Activated B cell treated with CpG ODN at 0.5 μM for 24 hours (primary cell): ENCODE measurements at regions of chr5 and their contacts with region 1.

Region 1: GRCh38 chr5:111512375-111513130 is at the start of gene STARD4:
- DNase-seq: peak; percentile 94
- ATAC-seq: peak; percentile 96
- H3K4me3 Mint-ChIP-seq: peak within 1 kb of the TSS; percentile 99
- H3K27ac Mint-ChIP-seq: peak within 1 kb of the TSS; percentile 99
- H3K4me1 Mint-ChIP-seq: peaks cover 35% of the 10 kb centered on the region
- H3K27me3 Mint-ChIP-seq: no peaks in the 10 kb centered on the region
- CTCF ChIP-seq: no peak
- total RNA-seq, gene STARD4: 32.2 and 40.3 TPM in 2 replicates

Region 2: GRCh38 chr5:110738812-110739651 is 773.5 kb before region 1 on chr5 and contains the start of gene SLC25A46:
- CTCF ChIA-PET with region 1: no interaction called
- POLR2A ChIA-PET with region 1: interaction called, 4 read pairs
- intact Hi-C with region 1: loop called (anchors 2 kb)
- DNase-seq: peak; percentile 79
- ATAC-seq: peak; percentile 82
- H3K4me3 Mint-ChIP-seq: peak within 1 kb of the TSS; percentile 97
- H3K27ac Mint-ChIP-seq: peak within 1 kb of the TSS; percentile 96
- H3K4me1 Mint-ChIP-seq: peaks cover 21% of the 10 kb centered on the region
- H3K27me3 Mint-ChIP-seq: peaks cover 3% of the 10 kb centered on the region
- CTCF ChIP-seq: no peak
- total RNA-seq, gene SLC25A46: 39.9 and 42.2 TPM in 2 replicates

Region 3: GRCh38 chr5:111530298-111530740 is 17.8 kb after region 1 on chr5:
- CTCF ChIA-PET with region 1: interaction called, 52 read pairs
- POLR2A ChIA-PET with region 1: interaction called, 33 read pairs
- intact Hi-C with region 1: loop called (anchors 1 kb)
- DNase-seq: peak; percentile 61
- ATAC-seq: peak; percentile 100
- H3K4me3 Mint-ChIP-seq: peak overlapping the region; percentile 49
- H3K27ac Mint-ChIP-seq: peak overlapping the region; percentile 75
- H3K4me1 Mint-ChIP-seq: peaks cover 23% of the 10 kb centered on the region
- H3K27me3 Mint-ChIP-seq: no peaks in the 10 kb centered on the region
- CTCF ChIP-seq: no peak

Region 4: GRCh38 chr5:111757355-111758283 is 245.1 kb after region 1 on chr5:
- CTCF ChIA-PET with region 1: no interaction called
- POLR2A ChIA-PET with region 1: interaction called, 13 read pairs
- intact Hi-C with region 1: loop called (anchors 2 kb)
- DNase-seq: peak; percentile 81
- ATAC-seq: peak; percentile 81
- H3K4me3 Mint-ChIP-seq: peak overlapping the region; percentile 88
- H3K27ac Mint-ChIP-seq: peak overlapping the region; percentile 91
- H3K4me1 Mint-ChIP-seq: peaks cover 23% of the 10 kb centered on the region
- H3K27me3 Mint-ChIP-seq: no peaks in the 10 kb centered on the region
- CTCF ChIP-seq: no peak

Region 5: GRCh38 chr5:112419986-112420864 is 907.7 kb after region 1 on chr5:
- CTCF ChIA-PET with region 1: no interaction called
- POLR2A ChIA-PET with region 1: no interaction called
- intact Hi-C with region 1: loop called (anchors 5 kb)
- DNase-seq: peak; percentile 68
- ATAC-seq: peak; percentile 84
- H3K4me3 Mint-ChIP-seq: peak overlapping the region; percentile 86
- H3K27ac Mint-ChIP-seq: no peak overlapping the region
- H3K4me1 Mint-ChIP-seq: peaks cover 11% of the 10 kb centered on the region
- H3K27me3 Mint-ChIP-seq: peaks cover 14% of the 10 kb centered on the region
- CTCF ChIP-seq: no peak

Region 6: GRCh38 chr5:112860929-112861637 is 1348.5 kb after region 1 on chr5 and contains the start of gene SRP19:
- CTCF ChIA-PET with region 1: no interaction called
- POLR2A ChIA-PET with region 1: no interaction called
- intact Hi-C with region 1: loop called (anchors 5 kb)
- DNase-seq: peak; percentile 83
- ATAC-seq: peak; percentile 94
- H3K4me3 Mint-ChIP-seq: peak within 1 kb of the TSS; percentile 96
- H3K27ac Mint-ChIP-seq: peak within 1 kb of the TSS; percentile 96
- H3K4me1 Mint-ChIP-seq: peaks cover 34% of the 10 kb centered on the region
- H3K27me3 Mint-ChIP-seq: peaks cover 4% of the 10 kb centered on the region
- CTCF ChIP-seq: no peak
- total RNA-seq, gene SRP19: 50.4 and 51.6 TPM in 2 replicates

Region 7: DNA sequence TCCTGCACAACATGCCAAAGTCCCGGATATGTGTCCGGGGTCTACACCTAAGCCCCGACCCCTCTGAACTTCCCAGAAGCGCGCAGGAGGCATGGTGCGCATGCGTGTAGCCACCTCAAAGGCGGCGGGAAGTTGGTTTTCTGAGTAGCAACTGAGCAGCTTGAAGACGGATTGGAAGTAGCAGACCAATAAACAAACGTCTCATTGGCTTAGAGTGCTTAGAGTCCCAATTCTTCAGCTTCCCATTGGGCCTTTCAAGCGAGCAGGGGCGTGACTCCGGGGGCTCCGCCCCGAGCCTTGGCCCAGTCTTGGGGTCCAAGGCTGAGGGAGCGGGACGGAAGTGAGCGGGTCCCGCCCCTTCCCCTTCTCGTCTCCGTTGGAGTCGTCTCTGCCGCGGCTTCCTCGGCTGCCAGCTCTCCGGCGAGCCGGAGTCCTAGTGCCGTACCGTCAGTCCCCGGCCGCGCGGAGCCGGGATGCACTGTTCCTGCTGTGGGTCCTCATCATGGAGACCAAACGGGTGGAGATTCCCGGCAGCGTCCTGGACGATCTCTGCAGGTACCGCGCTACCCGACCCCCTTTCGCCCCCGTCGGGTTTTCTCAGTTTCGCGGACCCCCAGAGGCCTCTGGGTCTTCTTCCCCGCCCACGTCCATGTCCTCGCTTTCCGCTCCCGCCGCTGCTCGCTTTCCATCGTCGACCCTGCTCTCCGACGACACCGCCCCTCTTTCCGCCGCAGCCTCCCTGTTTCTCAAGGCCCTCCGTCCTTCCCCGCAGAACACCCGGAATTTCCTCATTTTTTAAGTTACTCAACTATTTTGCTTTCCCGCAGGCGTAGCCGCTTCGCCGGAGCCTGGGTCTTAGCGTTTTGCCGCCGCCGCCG is 1464.1 kb after region 1 on chr5 and contains the start of gene DCP2:
- CTCF ChIA-PET with region 1: no interaction called
- POLR2A ChIA-PET with region 1: no interaction called
- intact Hi-C with region 1: loop called (anchors 2 kb)
- DNase-seq: peak; percentile 93
- ATAC-seq: peak; percentile 98
- H3K4me3 Mint-ChIP-seq: peak within 1 kb of the TSS; percentile 100
- H3K27ac Mint-ChIP-seq: peak within 1 kb of the TSS; percentile 96
- H3K4me1 Mint-ChIP-seq: peaks cover 53% of the 10 kb centered on the region
- H3K27me3 Mint-ChIP-seq: no peaks in the 10 kb centered on the region
- CTCF ChIP-seq: no peak
- total RNA-seq, gene DCP2: 53.5 and 56.0 TPM in 2 replicates